Right lobe of liver (tissue), 6 donors: ENCODE measurements at regions of chr6 and their contacts with region 1.

Region 1: DNA sequence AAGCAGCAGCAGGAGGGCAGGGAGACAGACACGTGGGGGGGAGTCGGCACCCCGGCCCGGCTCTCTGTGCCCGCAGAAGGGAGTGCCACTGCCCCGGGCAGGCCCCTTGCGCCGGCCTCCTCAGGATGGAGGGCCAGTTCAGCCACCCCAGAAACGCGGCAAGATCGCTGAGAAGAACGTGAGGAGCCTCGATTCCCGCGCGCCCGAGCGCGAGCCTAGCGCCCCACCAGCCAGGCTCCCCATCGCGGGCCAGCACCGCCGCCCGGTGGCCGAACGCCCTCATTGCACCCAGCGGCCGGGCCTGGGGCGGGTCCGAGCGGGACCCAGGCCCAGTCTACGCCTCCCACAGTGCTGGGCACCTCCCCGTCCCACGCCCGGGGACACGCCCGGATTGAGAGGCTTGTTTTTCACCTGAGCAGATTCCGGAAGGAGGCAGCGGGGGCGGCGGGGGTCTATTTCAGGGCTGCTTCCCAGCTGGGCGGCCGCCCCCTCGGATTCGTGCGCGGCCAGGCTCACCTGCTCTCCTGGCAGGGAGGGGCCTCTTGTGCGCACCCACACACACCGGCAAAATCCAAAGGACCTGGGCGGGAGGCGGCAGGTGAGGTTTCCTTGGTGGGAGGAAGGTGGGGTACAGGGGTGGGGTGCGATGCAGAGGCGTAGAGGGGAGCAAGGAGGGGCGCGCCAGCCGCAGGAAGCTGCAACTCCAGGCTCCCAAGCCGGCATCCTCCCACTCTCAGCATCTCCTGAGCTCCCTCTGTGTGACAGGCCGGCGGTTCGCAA is 9.0 kb upstream of the GRM4 start:
- DNase-seq: peak in 1 of 3 donors; percentile 49
- ATAC-seq: peak; percentile 71 to 89 (median 83)
- H3K4me3 ChIP-seq: no peak overlapping the region
- H3K27ac ChIP-seq: no peak overlapping the region
- H3K4me1 ChIP-seq: no peaks in the 10 kb centered on the region
- H3K27me3 ChIP-seq: peaks cover 0 to 9% of the 10 kb centered on the region in 2 donors
- CTCF ChIP-seq: peak; percentile 81 to 94 (median 93)
- POLR2A ChIP-seq: no peak

Region 2: DNA sequence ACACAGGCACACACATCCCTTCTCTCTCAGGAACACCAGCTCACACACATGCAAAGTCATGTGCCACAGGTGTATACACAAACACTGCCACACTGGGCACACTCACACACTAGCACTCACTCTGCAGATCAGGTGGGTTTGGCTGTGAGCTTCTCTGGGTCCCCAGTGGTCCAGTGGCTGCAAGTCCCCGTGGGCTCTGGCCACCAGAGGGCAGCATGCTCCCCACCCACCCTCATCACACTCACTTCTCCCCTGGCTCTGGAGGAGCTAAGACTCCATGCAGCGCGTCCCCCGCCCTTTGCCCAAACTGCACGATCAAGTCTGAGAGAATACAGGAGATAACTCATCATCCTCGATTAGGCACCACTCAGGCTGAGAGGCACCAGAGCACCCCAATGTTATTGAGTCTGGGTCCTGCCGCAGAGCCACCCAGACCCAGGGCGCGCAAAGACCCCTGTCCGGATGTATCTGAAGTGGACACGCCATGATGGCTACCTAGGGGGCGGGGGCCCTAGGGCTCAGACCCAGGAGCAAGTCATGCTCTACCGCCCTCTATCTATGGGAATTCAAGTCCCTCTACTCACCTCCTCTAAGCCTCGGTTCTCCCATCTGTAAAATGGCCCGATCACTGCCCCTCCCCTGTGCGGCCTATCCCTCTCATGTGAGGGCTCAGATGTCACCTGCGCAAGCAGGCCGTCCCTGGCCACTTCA is 99.5 kb before region 1 on chr6:
- intact Hi-C with region 1: loop called in 1 of 2 experiments (anchors 10 kb)
- DNase-seq: peak in 2 of 3 donors; percentile 45 to 56
- ATAC-seq: peak; percentile 61 to 76 (median 76)
- H3K4me3 ChIP-seq: no peak overlapping the region
- H3K27ac ChIP-seq: no peak overlapping the region
- H3K4me1 ChIP-seq: no peaks in the 10 kb centered on the region
- H3K27me3 ChIP-seq: no peaks in the 10 kb centered on the region
- CTCF ChIP-seq: peak; percentile 51 to 86 (median 83)
- POLR2A ChIP-seq: no peak

Region 3: DNA sequence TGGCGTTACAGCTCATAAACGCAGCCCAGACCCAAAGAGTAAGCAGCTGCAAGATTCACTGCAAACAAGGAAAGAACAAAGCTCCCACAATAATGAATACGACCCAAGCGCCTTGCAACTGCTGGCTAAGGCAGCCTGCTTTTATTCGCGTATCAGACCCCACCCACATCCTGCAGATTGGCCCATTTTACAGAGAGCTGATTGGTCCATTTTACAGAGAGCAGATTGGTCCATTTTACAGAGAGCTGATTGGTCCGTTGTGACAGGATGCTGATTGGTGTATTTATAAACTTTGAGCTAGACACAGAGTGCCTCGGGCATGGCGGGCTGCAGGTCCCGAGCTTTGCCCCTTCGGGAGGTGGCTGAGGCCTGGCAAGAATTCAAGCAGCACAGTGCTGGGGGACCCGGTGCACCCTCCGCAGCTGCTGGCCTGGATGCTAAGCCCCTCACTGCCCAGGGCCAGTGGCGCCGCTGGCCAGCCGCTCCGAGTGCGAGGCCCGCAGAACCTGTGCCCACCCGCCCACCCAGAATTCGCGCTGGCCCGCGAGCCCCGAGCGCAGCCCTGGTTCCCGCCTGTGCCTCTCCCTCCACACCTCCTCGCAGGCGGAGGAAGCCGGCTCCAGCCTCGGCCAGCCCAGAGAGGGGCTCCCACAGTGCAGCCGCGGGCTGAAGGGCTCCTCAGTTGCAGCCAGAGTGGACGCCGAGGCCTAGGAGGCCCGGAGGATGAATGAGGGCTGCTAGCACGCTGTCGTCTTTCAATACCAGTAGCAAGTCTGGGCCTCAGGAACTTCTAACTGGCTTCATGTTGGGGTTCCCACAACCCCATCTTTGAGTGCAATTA is 282.2 kb after region 1 on chr6:
- intact Hi-C with region 1: no loop called
- DNase-seq: no peak
- ATAC-seq: no peak
- H3K4me3 ChIP-seq: no peak overlapping the region
- H3K27ac ChIP-seq: no peak overlapping the region
- H3K4me1 ChIP-seq: no peaks in the 10 kb centered on the region
- H3K27me3 ChIP-seq: no peaks in the 10 kb centered on the region
- CTCF ChIP-seq: no peak
- POLR2A ChIP-seq: no peak